ENCODE measurements at regions of chr16 and their contacts with region 1.

Region 1: GRCh38 chr16:84593825-84594724 is 23.8 kb downstream of the COTL1 start:
- DNase-seq: peak in 3 of 4 experiments; percentile 46 to 86 (median 73)
- ATAC-seq: peak; percentile 84
- H3K4me3 ChIP-seq: peak overlapping the region; percentile 0; the same call in 1 of the 2 replicates
- H3K27ac ChIP-seq: peak overlapping the region; percentile 74
- H3K4me1 ChIP-seq: peaks cover 36 to 37% of the 10 kb centered on the region in 2 experiments
- H3K27me3 ChIP-seq: no peaks in the 10 kb centered on the region
- CTCF ChIP-seq: 0 out of 6 replicates have a peak, but pooled peaks of 1 of the 3 experiments have one; percentile 3
- EP300 ChIP-seq: peak; percentile 73
- POLR2A ChIP-seq: no peak
- RAD21 ChIP-seq: peak in 1 of 2 experiments; percentile 19; a peak in 1 of 4 replicates

Region 2: DNA sequence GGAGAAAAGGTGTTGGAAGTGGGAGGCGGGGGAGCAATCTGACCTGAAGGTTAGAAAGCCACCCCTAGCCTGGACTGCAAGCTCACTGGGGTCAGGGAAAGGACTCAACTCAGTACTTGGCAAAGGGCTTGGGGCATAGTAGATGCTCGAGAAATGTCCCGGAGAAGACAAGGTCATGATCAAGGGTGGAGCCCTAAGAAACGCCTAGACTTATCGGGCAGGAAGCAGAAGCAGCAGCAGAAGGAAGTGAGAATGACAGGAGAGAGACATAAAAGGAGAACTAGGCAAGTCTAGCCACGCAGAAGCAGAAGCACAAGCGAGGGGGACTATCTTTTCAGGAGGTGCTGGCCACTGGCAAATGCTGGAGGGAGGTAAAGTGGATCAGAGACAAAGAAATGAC is 13.6 kb after region 1 on chr16:
- CTCF ChIA-PET with region 1: no interaction called
- POLR2A ChIA-PET with region 1: interaction called, 4 read pairs
- in situ Hi-C with region 1: no loop called
- intact Hi-C with region 1: loop called (anchors 1 kb)
- DNase-seq: peak in 2 of 4 experiments; percentile 72 to 80
- ATAC-seq: peak; percentile 79
- H3K4me3 ChIP-seq: no peak overlapping the region
- H3K27ac ChIP-seq: peak overlapping the region; percentile 53
- H3K4me1 ChIP-seq: peaks cover 41 to 43% of the 10 kb centered on the region in 2 experiments
- H3K27me3 ChIP-seq: no peaks in the 10 kb centered on the region
- CTCF ChIP-seq: no peak
- EP300 ChIP-seq: peak; percentile 72
- POLR2A ChIP-seq: no peak
- RAD21 ChIP-seq: no peak

Region 3: DNA sequence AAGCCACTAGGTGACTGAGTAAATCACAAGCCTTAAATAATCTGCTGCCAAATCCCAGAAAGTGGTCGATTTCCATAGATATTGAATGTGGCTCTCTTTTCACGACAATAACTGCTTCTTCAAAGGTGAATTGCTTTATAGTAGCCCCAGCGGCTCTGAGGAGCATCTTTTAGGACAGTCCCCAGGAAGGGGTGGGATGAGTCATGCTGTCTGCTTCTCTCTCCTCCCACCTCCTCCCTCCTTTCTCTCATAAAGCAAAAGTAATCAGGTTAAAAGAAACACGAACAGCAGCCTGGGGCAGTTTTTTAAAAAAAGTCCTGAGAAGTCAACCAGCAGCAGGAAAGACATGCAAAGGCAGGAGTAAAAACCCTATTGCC is 435.3 kb after region 1 on chr16:
- CTCF ChIA-PET with region 1: no interaction called
- POLR2A ChIA-PET with region 1: no interaction called
- in situ Hi-C with region 1: no loop called
- intact Hi-C with region 1: no loop called
- DNase-seq: peak; percentile 73 to 80 (median 76)
- ATAC-seq: peak; percentile 69
- H3K4me3 ChIP-seq: no peak overlapping the region
- H3K27ac ChIP-seq: no peak overlapping the region
- H3K4me1 ChIP-seq: peaks cover 33 to 39% of the 10 kb centered on the region in 2 experiments
- H3K27me3 ChIP-seq: no peaks in the 10 kb centered on the region
- CTCF ChIP-seq: no peak
- EP300 ChIP-seq: no peak
- POLR2A ChIP-seq: no peak
- RAD21 ChIP-seq: no peak